Activated CD4-positive, alpha-beta T cell treated with anti-CD3 and anti-CD28 coated beads, Interleukin-2, amount 10 ng/mL, durations not matched to agents 24 days and 14 days (primary cell): ENCODE measurements at regions of chr5 and their contacts with region 1.

Region 1: GRCh38 chr5:77491783-77492652 is at the start of gene WDR41:
- DNase-seq: peak; percentile 96
- H3K4me3 Mint-ChIP-seq: peak within 1 kb of the TSS; percentile 83
- H3K27ac Mint-ChIP-seq: peak within 1 kb of the TSS; percentile 92
- H3K4me1 Mint-ChIP-seq: peaks cover 23% of the 10 kb centered on the region
- H3K27me3 Mint-ChIP-seq: peaks cover 16% of the 10 kb centered on the region
- total RNA-seq, gene WDR41: 30.9 and 32.6 TPM in 2 replicates

Region 2: DNA sequence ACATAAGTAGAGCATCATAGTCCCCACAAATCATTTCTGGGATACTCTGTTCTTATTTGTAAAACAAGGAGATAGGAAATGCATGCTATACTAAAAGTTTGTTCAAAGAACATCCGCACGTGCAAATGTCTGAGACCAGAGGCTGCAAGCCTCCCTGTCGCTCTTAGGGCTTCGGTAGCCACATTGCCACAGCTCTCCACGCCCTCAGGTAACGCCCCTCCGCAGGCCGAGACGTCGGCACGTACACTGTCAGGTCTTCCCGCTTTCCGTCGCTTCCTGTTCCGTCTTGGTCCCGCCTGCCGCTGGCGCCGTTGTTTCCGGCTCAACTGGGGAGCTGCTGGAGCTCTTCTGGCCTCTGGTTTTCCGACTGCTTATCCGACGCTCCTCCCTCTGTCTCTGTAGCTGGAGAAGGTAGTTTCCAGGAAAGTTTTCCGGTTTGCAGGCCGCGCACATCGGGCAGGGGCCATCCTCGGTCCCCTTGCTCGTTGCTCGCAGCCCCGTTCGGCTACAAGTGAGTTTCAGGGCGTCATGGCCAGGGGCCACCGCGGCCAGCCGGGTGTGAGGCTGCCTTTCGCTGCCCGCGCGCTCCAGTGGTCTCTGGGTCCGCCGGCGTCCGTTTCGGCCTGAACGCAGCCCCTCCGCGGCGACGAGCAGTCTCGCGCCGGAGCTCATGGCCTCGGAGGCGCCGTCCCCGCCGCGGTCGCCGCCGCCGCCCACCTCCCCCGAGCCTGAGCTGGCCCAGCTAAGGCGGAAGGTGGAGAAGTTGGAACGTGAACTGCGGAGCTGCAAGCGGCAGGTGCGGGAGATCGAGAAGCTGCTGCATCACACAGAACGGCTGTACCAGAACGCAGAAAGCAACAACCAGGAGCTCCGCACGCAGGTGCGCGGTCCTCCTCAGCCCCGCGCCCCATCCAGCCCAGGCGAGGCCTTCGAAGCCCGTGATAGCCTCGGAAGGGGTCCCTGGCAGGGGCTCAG is 461.6 kb before region 1 on chr5 and contains the start of gene AGGF1:
- intact Hi-C with region 1: loop called (anchors 1 kb)
- DNase-seq: peak; percentile 97
- H3K4me3 Mint-ChIP-seq: peak within 1 kb of the TSS; percentile 99
- H3K27ac Mint-ChIP-seq: peak within 1 kb of the TSS; percentile 95
- H3K4me1 Mint-ChIP-seq: peaks cover 23% of the 10 kb centered on the region
- H3K27me3 Mint-ChIP-seq: peaks cover 8% of the 10 kb centered on the region
- total RNA-seq, gene AGGF1: 29.1 and 32.9 TPM in 2 replicates

Region 3: DNA sequence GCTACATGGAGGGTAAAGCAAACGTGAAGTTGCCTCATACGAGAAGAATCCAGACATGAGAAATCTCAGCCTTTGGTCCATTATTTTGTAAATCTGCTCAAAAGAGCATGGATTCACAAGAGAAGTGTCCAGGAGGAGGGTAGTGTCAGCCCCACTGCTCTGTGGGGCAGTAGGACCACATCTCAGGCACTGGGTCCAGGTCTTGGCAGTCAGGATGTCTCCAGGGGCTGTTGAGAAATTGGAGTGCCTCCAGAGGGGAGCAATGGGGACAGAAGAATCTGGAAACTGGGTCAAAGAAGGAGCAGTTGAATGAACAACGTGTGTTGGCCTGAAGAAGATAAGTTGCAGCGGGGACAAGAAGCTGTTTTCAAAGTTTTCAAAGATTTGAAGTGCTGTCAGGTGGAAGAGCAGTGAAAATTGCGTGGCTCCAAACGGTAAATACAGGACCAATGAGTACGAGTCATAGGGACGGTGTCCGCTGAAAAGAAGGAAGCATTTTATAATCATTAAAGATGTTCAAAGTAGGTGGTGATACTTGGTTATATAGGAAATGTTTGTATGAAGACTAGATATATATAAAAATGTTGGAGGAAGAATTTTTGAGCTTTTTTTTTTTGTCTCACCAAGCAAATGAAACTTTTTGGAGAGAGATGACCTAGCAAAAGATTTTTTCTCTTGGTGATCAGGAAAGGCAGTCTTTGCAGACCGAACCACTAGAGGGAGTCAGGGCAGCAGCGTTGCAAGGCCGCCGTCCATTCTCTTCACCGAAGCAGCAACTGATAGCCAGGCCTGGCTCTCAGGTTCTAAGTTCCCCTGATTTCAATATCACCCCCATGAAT is 347.8 kb before region 1 on chr5:
- intact Hi-C with region 1: loop called (anchors 1 kb)
- DNase-seq: peak; percentile 86
- H3K4me3 Mint-ChIP-seq: no peak overlapping the region
- H3K27ac Mint-ChIP-seq: no peak overlapping the region
- H3K4me1 Mint-ChIP-seq: peaks cover 12% of the 10 kb centered on the region
- H3K27me3 Mint-ChIP-seq: peaks cover 14% of the 10 kb centered on the region

Region 4: GRCh38 chr5:77328930-77329647 is 162.9 kb before region 1 on chr5:
- intact Hi-C with region 1: loop called (anchors 5 kb)
- DNase-seq: peak; percentile 58
- H3K4me3 Mint-ChIP-seq: peak overlapping the region; percentile 39
- H3K27ac Mint-ChIP-seq: peak overlapping the region; percentile 78
- H3K4me1 Mint-ChIP-seq: peaks cover 29% of the 10 kb centered on the region
- H3K27me3 Mint-ChIP-seq: peaks cover 4% of the 10 kb centered on the region

Region 5: DNA sequence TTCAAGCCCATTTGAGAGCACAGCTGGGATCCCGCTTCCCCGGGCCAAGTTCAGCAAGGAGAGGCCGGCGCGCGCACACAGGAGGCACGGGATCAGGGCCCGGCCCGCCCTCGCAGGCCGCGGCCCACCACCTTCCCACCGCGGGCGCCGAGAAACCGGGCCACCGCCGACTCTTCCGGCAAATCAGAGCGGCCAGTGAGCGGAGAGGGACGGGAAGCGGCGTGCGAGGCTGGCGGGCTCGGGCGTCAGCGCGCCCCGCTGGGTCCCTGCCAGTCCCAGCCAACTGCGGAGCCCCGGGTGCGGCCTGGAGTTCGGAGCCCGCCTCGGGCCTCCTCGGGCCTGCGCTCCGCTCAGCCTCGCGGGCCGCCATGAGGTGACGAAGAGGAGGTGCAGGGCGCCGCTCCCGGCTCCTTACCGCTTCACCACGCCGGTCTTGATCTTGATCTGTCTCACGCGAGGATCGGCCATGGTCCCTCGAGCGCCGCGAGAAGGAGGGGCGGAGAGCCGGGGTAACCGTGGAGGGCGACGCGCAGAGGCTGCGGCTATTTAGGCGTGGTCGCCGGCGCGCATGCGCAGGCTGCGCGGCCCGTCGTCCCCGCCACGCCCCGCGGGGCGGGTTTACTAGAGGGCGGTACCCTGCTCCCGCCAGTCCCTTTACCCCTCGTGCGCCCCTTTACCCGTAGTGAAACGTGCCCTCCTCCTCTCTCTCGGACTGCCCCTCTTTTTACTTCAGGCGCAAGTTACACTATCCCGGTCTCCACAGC is 284.0 kb after region 1 on chr5 and contains the start of gene TBCA:
- intact Hi-C with region 1: loop called (anchors 5 kb)
- DNase-seq: peak; percentile 98
- H3K4me3 Mint-ChIP-seq: peak within 1 kb of the TSS; percentile 96
- H3K27ac Mint-ChIP-seq: peak within 1 kb of the TSS; percentile 98
- H3K4me1 Mint-ChIP-seq: peaks cover 41% of the 10 kb centered on the region
- H3K27me3 Mint-ChIP-seq: no peaks in the 10 kb centered on the region
- total RNA-seq, gene TBCA: 199 and 207 TPM in 2 replicates

Region 6: DNA sequence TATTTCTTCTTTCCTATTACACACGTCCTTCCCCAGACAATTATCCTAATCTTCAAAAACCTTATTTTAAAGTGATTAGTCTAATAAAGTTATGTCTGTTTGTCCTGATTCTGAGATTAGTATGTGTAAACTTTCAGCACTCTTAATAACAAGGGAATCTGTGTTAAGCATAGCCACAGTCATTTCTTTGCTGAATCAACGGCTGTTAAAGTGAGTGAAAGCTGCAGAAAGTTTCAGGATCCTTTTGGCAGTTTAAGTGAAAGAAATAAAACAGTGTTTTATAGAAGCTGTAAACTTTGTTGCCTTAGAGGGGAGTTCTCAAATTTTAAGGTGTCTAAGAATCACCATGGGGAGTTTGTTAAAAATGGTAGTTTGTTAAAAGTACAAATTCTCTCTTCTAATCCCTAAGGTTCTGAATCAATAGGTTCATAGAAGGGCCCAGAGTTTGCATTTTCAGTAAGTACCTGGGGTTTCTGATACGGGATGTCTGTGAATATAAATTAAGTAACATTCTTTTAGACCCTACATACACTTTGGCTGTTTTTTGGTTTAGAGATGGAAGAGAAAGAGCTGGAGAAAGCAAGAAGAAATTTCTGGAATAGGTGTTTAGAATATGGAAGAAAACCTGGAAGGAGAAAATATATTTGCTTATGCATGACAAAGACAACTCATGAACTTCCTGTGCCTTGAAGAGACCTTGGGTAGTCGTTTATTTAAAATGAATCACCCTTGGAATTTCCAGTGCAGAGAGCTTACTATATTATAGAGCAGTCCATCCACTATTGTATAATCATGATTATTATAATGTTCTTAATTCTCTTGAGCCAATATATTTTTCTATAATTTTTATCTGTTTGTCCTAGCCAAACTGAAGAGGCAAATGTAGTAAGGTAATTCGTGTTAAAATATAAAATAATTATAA is 914.1 kb after region 1 on chr5:
- intact Hi-C with region 1: no loop called
- DNase-seq: no peak
- H3K4me3 Mint-ChIP-seq: no peak overlapping the region
- H3K27ac Mint-ChIP-seq: peak overlapping the region; percentile 68
- H3K4me1 Mint-ChIP-seq: peaks cover 27% of the 10 kb centered on the region
- H3K27me3 Mint-ChIP-seq: no peaks in the 10 kb centered on the region